HEK293T (cell line): ENCODE measurements at regions of chr9 and their contacts with region 1.

Region 1: GRCh38 chr9:121201738-121202533 is at the start of gene RAB14:
- DNase-seq: peak; percentile 100

Region 2: DNA sequence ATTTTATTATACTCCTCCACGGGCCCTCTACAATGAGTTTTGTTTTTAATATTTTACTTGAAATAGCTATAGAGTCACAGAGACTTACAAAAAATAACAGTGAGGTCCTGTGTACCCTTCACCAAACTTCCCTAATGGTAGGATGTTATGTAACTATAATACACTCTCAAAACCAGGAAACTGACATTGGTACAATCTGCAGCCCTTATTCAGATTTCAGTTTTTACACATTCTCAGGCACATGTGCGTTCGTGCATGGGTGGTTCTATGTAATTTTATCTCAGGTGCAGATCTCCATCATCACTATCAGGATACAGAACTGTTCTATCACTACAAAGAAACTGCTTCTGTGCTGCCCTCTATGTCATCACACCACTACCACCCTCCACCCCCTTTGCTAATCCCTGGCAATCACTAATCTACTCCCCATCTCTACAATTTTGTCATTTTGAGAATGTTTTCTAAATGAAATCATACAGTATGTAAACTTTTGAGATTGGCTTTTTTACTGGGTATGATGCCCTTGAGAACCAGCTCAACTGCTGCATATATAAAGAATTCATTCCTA is 16.7 kb before region 1 on chr9:
- CTCF ChIA-PET with region 1: interaction called, 3 read pairs
- POLR2A ChIA-PET with region 1: interaction called, 13 read pairs
- DNase-seq: no peak

Region 3: DNA sequence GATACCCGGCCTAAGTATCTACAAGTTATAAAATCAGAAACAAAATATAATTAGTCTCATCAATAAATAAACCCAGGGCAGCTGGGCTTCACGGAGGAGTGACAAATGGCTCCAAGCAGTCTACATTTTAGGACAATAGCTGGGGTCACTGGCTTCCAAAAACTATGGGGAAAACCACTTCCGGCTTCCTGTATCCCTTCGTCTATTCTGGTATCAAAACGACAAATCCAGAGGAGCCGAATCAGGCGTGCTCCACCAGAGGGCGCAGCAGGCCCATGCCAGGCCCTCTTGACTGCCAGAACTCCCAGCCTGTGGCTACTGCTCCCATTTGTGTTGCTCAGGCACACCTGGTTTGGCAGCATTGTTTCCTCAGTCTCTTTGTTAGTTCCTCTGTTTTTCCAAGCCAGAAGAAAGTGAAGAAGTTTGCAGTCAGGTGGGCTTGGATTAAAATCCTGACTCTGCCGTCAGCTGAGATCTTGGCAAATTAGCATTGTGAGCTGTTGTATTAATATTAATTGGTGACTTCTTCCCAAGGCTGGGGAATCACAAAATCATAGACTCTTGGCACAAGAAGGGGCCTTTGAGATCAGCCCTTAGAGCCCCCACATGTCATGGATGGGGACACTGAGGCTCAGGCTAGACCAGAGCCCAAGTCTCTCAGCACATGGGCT is 11.3 kb after region 1 on chr9:
- CTCF ChIA-PET with region 1: interaction called, 8 read pairs
- POLR2A ChIA-PET with region 1: interaction called, 15 read pairs
- DNase-seq: peak; percentile 86